ENCODE measurements at regions of chr3 and their contacts with region 1.

Region 1: DNA sequence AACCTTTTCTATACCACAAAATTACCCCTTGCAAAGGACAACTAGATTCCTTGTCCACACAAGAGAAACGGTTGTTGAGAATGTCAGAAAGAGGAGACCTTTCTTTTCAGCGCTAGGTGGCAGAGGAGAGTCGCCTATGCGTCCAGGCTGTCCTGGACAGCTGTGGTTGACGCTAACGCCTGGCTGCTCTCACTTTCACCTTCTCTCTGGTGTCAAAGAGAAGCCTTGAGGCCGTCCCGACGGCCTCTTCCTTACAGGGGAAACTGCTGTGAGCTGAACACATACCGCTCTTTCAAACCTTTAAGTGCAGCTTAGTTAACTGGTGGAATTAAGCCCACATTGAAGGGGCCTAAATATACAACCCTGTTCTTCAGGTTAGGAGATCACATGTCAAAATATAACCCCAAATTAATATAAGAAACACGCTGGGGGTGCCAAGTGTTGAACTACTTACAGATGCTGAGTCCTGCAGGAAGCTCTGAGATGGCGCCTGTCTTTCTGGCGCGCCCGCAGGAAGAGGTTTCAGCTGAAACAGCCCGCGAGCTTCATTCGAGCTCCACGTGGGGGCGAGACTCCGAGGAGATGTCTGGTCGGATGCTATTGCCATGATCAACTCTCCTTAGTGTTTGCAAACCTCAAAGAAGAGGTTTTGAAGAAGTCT is 26.1 kb upstream of the KBTBD8 start:
- DNase-seq: peak; percentile 94
- H3K4me3 ChIP-seq: peak overlapping the region; percentile 39
- H3K27ac ChIP-seq: peak overlapping the region; percentile 73
- H3K4me1 ChIP-seq: peaks cover 21% of the 10 kb centered on the region
- CTCF ChIP-seq: peak; percentile 95

Region 2: DNA sequence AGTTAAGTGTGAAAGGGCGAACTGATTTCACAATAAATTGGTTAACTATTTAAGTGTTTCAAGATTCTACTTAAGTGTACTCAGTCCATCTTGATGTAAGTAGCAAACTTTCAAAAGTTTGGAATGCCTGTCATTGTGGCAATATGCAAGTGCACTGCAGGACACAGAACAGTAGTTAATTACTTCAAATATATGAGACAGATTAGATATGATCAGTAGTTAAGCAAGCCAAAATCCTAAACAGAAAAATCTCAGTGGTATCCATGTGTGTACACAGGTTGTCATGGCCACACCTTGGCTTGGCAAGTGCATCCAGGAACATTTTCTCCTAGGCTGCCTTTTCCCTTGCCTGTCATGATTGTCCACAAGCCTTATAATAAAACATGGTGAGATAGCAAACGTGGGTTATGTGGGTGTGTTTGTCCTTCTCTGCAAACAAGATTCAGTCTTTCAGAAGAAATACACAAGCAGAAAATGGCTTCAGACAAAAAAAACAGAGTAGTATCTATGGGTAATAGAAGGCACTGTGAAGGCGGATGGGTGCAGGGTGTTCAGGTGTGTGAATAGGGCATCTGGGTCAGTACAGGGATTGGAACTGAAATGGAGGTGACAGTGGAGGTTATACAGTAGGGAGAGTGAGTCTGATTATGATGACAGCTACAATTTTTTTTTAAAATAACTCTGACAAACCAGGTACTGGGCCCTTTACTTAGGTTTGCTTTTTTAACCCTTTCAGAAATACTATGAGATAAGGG is 242.2 kb before region 1 on chr3:
- CTCF ChIA-PET with region 1: no interaction called
- POLR2A ChIA-PET with region 1: no interaction called
- intact Hi-C with region 1: no loop called
- DNase-seq: no peak
- H3K4me3 ChIP-seq: no peak overlapping the region
- H3K27ac ChIP-seq: no peak overlapping the region
- H3K4me1 ChIP-seq: no peaks in the 10 kb centered on the region
- CTCF ChIP-seq: no peak

Region 3: GRCh38 chr3:66830301-66830700 is 141.7 kb before region 1 on chr3:
- CTCF ChIA-PET with region 1: no interaction called
- POLR2A ChIA-PET with region 1: no interaction called
- intact Hi-C with region 1: no loop called
- DNase-seq: no peak
- H3K4me3 ChIP-seq: no peak overlapping the region
- H3K27ac ChIP-seq: no peak overlapping the region
- H3K4me1 ChIP-seq: no peaks in the 10 kb centered on the region
- CTCF ChIP-seq: no peak

Region 4: DNA sequence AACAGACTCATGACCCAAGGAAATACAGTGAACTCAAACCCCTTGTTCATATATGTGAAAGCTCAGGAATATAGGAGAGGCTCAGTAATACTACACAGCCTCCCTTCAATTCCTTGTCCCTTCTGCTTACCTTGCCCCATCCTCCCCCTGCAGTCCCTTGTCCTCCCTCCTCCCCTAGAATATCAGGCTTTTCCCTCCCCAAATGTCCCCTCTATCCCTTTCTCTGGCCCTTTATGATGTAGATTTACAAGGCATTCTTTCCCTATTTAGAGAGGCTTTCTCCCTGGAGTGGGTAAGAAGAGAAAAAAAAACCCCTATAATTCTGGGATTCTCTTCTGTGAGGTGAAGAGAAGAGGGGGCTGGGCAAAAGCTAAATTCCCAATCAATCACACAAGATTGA is 38.8 kb before region 1 on chr3:
- CTCF ChIA-PET with region 1: interaction called, 10 read pairs
- POLR2A ChIA-PET with region 1: interaction called, 13 read pairs
- intact Hi-C with region 1: loop called (anchors 2 kb)
- DNase-seq: no peak
- H3K4me3 ChIP-seq: no peak overlapping the region
- H3K27ac ChIP-seq: no peak overlapping the region
- H3K4me1 ChIP-seq: no peaks in the 10 kb centered on the region
- CTCF ChIP-seq: no peak

Region 5: DNA sequence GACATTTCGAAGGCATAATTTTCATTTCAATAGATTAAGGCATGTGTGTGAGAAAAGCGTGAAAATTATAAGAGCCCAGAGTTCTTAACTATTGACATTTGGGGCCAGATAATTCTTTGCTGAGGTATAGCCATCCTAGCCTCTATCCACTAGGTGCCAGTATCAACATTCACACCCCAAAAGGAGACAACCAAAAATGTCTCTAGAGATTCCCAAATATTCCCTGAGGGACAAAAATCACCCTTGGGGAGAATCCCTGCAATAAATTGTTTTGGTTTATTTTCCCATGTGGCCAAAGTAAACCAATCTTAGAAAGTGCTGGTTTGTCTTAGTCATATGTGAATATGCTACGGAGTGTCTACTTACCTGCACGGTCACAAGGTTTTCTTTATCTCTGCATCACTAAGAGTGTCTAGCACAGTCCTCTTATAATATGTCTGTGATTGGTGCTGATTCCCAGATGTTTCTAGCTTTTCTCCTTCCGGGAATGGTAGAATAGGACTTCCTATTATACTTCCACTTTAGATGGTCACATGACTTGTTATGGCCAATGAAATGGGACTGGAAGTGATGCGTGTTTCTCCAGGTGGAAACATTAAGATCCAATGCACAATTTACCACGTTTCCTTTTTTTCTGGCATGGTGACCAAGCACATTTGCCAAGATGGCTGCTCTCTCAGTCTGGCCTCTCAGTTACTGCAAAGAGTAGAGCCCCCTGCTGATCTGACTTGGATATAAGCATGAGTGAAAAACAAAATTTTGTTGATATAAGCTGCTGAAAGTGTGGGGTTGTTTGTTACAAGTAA is 18.0 kb after region 1 on chr3:
- CTCF ChIA-PET with region 1: interaction called, 14 read pairs
- POLR2A ChIA-PET with region 1: interaction called, 16 read pairs
- intact Hi-C with region 1: no loop called
- DNase-seq: peak; percentile 71
- H3K4me3 ChIP-seq: peak overlapping the region; percentile 61
- H3K27ac ChIP-seq: peak overlapping the region; percentile 52
- H3K4me1 ChIP-seq: peaks cover 10% of the 10 kb centered on the region
- CTCF ChIP-seq: peak; percentile 88

Region 6: DNA sequence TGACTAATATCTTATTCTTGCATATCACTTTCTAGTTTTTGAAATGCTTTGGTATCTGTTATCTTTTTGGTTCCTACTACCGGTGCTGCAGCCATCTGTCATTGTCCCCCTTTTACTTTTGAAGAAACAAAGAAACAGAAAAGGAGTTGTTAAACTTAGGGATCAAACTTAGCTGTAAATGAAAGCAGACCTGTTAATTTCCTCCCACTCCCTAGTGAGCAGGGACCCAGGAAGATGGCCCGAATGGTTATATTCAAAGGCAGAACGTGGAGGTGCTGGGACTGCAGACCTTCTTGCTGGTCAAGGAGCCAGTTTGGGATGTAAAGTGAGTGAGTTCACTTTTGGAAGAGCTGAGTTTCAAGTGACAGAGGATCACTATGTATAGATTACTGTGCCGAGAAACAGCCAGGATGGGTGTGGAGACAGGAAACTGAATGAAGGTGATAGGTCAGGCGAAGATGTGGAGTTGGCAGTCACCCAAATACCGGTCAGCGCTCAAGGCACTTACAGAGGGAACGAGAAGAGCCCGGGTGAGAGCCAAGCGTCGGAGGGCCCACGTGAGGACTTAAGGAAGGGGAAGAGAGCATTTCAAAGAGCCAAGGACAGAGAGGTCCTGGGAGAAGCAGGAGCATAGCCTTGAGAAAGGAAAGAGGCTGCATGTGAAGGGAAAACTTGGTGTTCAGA is 46.2 kb after region 1 on chr3:
- CTCF ChIA-PET with region 1: interaction called, 5 read pairs
- POLR2A ChIA-PET with region 1: interaction called, 10 read pairs
- intact Hi-C with region 1: no loop called
- DNase-seq: peak; percentile 58
- H3K4me3 ChIP-seq: peak overlapping the region; percentile 54
- H3K27ac ChIP-seq: peak overlapping the region; percentile 94
- H3K4me1 ChIP-seq: peaks cover 67% of the 10 kb centered on the region
- CTCF ChIP-seq: no peak

Region 7: GRCh38 chr3:67113802-67114407 is 141.9 kb after region 1 on chr3:
- CTCF ChIA-PET with region 1: interaction called, 10 read pairs
- POLR2A ChIA-PET with region 1: interaction called, 5 read pairs
- intact Hi-C with region 1: loop called (anchors 2 kb)
- DNase-seq: peak; percentile 80
- H3K4me3 ChIP-seq: no peak overlapping the region
- H3K27ac ChIP-seq: no peak overlapping the region
- H3K4me1 ChIP-seq: no peaks in the 10 kb centered on the region
- CTCF ChIP-seq: peak; percentile 99

Measured in OCI-LY7 (cell line).